H1 (cell line): ENCODE measurements at regions of chr9 and their contacts with region 1.

Region 1: GRCh38 chr9:122099271-122099869 is 6.3 kb upstream of the TTLL11 start:
- DNase-seq: peak; percentile 47 to 92
- H3K4me3 ChIP-seq: no peak overlapping the region
- H3K27ac ChIP-seq: no peak overlapping the region
- H3K4me1 ChIP-seq: no peaks in the 10 kb centered on the region
- H3K27me3 ChIP-seq: peaks cover 0 to 2% (median under 1%) of the 10 kb centered on the region in 4 experiments; a peak in 3 of 7 replicates
- CTCF ChIP-seq: peak; percentile 65 to 95 (median 74)
- EP300 ChIP-seq: no peak
- POLR2A ChIP-seq: no peak
- RAD21 ChIP-seq: peak; percentile 89 to 92

Region 2: GRCh38 chr9:121735065-121735789 is 364.1 kb before region 1 on chr9:
- CTCF ChIA-PET with region 1: no interaction called
- POLR2A ChIA-PET with region 1: no interaction called
- DNase-seq: peak; percentile 71
- H3K4me3 ChIP-seq: peak overlapping the region in 3 of 4 experiments; percentile 52 to 73 (median 56); a peak in 5 of 8 replicates
- H3K27ac ChIP-seq: no peak overlapping the region
- H3K4me1 ChIP-seq: peaks cover 12 to 42% (median 34%) of the 10 kb centered on the region in 4 experiments
- H3K27me3 ChIP-seq: peaks cover 0 to 8% (median 4%) of the 10 kb centered on the region in 4 experiments; a peak in 4 of 7 replicates
- CTCF ChIP-seq: peak; percentile 67 to 80 (median 77)
- EP300 ChIP-seq: no peak
- POLR2A ChIP-seq: no peak
- RAD21 ChIP-seq: peak; percentile 65 to 74

Region 3: DNA sequence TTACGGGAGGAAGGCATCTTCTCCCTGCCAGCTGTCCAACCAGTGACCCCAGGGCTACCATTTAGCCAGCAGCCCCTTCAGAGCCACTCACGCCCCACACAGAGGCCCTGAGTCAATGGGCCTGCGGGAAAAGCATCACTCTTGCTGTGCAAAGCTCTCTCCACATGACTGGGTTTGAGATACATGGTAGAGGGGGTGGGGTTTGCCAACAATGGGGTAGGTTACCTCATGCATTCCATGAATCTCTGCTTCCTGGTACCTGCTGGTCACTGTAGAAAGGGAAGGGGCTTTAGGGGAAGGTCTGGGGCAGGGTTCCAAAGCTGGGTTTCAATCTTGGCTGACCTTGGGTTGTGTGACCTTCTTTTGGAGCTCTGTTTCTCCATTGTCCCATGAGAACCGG is 16.7 kb after region 1 on chr9:
- CTCF ChIA-PET with region 1: interaction called, 405 read pairs
- POLR2A ChIA-PET with region 1: interaction called, 4 read pairs
- DNase-seq: no peak
- H3K4me3 ChIP-seq: no peak overlapping the region
- H3K27ac ChIP-seq: peak overlapping the region; percentile 51; the same call in 1 of the 2 replicates
- H3K4me1 ChIP-seq: peaks cover 8 to 16% (median 12%) of the 10 kb centered on the region in 4 experiments
- H3K27me3 ChIP-seq: no peaks in the 10 kb centered on the region; a peak in 2 of 7 replicates
- CTCF ChIP-seq: no peak
- EP300 ChIP-seq: no peak
- POLR2A ChIP-seq: peak in 1 of 2 experiments; percentile 47; a peak in 1 of 3 replicates
- RAD21 ChIP-seq: no peak

Region 4: DNA sequence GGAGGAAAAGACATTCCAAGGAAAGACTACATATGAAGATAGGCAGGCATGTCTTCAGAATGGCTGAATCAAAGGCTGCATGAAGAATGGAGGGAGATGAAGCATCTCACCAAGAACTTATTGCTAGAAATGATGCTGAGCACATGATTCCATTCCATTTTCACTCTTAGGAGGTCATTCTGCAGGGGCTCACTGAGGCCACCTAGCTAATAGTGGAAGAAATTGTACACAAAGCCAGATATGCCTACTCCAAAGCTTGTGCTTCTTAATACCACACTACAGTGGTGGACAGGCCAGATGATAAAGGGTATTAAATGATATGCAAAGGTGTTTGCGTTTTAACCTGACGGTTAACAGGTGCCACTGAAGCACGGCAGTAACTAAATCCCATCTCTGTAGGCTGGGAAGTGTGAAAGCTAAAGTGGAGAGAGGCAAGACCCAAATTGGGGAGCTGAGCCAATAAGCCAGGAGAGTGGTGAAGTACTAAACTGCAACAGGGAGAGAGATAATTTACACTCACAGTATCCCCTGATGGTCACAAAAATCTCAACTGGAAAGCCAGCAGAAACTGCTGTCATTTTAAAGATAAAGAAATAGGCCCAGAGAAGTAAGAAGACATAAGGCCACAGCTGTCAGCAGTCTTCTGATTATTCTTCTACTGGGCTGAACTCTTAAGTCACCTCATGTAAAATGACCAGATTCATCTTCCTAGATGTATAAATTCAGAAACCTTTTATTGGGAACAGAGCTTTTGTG is 45.6 kb after region 1 on chr9:
- CTCF ChIA-PET with region 1: interaction called, 21 read pairs
- POLR2A ChIA-PET with region 1: no interaction called
- DNase-seq: no peak
- H3K4me3 ChIP-seq: no peak overlapping the region
- H3K27ac ChIP-seq: no peak overlapping the region
- H3K4me1 ChIP-seq: no peaks in the 10 kb centered on the region
- H3K27me3 ChIP-seq: no peaks in the 10 kb centered on the region
- CTCF ChIP-seq: peak in 2 of 3 experiments; percentile 16 to 52; a peak in 2 of 4 replicates
- EP300 ChIP-seq: no peak
- POLR2A ChIP-seq: no peak
- RAD21 ChIP-seq: peak; percentile 9 to 31; a peak in 2 of 4 replicates

Region 5: DNA sequence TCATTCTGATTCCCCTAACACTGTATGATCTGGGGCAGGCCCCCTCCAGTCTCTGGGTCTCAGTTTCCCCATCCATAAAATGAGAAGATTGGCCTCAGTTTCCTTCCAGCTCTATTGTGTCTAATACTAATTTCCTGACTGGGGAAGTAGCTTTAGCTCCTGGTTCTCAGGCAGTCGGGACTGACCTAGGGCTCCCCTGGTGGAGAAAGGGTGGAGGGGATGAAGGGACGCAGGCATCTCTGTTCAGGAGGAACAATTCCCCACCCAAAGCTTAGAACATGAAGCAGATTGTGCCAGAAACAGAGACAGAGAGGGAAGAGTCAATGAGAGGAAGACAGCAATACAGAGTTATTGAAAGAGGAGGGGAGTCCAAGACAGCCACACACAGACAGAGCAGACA is 257.3 kb after region 1 on chr9:
- CTCF ChIA-PET with region 1: interaction called, 124 read pairs
- POLR2A ChIA-PET with region 1: no interaction called
- DNase-seq: no peak
- H3K4me3 ChIP-seq: no peak overlapping the region
- H3K27ac ChIP-seq: no peak overlapping the region
- H3K4me1 ChIP-seq: no peaks in the 10 kb centered on the region
- H3K27me3 ChIP-seq: no peaks in the 10 kb centered on the region; a peak in 1 of 7 replicates
- CTCF ChIP-seq: peak; percentile 68 to 79 (median 78)
- EP300 ChIP-seq: no peak
- POLR2A ChIP-seq: no peak
- RAD21 ChIP-seq: peak; percentile 30 to 56; a peak in 3 of 4 replicates